AG04450 (cell line): ENCODE measurements at regions of chr1 and their contacts with region 1.

Region 1: GRCh38 chr1:226121587-226122400 is 59.3 kb downstream of the H3-3A start:
- DNase-seq: no peak
- H3K4me3 ChIP-seq: peak overlapping the region; percentile 67
- H3K27ac ChIP-seq: no peak overlapping the region
- H3K27me3 ChIP-seq: peaks cover 3% of the 10 kb centered on the region
- CTCF ChIP-seq: peak; percentile 45

Region 2: GRCh38 chr1:226109829-226110248 is 12.0 kb before region 1 on chr1:
- CTCF ChIA-PET with region 1: interaction called, 73 read pairs
- POLR2A ChIA-PET with region 1: no interaction called
- DNase-seq: no peak
- H3K4me3 ChIP-seq: peak overlapping the region; percentile 59
- H3K27ac ChIP-seq: peak overlapping the region; percentile 65
- H3K27me3 ChIP-seq: no peaks in the 10 kb centered on the region
- CTCF ChIP-seq: no peak

Region 3: DNA sequence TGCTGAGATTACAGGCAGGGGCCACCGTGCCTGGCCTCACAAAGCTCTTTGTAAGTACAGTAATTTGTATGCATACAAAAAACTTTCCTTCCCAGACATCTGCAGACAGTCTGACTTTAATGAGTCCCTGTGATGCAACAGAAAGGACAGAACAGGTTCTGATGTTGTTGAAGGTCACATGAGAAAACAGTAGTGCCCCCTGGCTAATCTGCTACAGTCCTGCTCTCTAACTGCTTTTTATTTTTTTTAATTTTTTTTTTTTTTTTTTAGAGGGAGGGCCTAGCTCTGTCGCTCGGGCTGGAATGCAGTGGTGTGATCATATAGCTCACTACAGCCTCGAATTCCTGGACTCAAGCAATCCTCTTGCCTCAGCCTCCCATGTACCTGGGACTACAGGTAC is 28.0 kb after region 1 on chr1:
- CTCF ChIA-PET with region 1: interaction called, 20 read pairs
- POLR2A ChIA-PET with region 1: no interaction called
- DNase-seq: no peak
- H3K4me3 ChIP-seq: no peak overlapping the region
- H3K27ac ChIP-seq: no peak overlapping the region
- H3K27me3 ChIP-seq: no peaks in the 10 kb centered on the region
- CTCF ChIP-seq: 0 out of 2 replicates have a peak, but pooled peaks have one; percentile 24

Region 4: GRCh38 chr1:226201029-226201593 is 79.3 kb after region 1 on chr1:
- CTCF ChIA-PET with region 1: interaction called, 184 read pairs
- POLR2A ChIA-PET with region 1: no interaction called
- DNase-seq: no peak
- H3K4me3 ChIP-seq: no peak overlapping the region
- H3K27ac ChIP-seq: no peak overlapping the region
- H3K27me3 ChIP-seq: peaks cover 6% of the 10 kb centered on the region
- CTCF ChIP-seq: peak; percentile 53

Region 5: GRCh38 chr1:226327761-226328162 is 206.0 kb after region 1 on chr1:
- CTCF ChIA-PET with region 1: interaction called, 27 read pairs
- POLR2A ChIA-PET with region 1: no interaction called
- DNase-seq: no peak
- H3K4me3 ChIP-seq: no peak overlapping the region
- H3K27ac ChIP-seq: no peak overlapping the region
- H3K27me3 ChIP-seq: peaks cover 2% of the 10 kb centered on the region
- CTCF ChIP-seq: no peak

Region 6: DNA sequence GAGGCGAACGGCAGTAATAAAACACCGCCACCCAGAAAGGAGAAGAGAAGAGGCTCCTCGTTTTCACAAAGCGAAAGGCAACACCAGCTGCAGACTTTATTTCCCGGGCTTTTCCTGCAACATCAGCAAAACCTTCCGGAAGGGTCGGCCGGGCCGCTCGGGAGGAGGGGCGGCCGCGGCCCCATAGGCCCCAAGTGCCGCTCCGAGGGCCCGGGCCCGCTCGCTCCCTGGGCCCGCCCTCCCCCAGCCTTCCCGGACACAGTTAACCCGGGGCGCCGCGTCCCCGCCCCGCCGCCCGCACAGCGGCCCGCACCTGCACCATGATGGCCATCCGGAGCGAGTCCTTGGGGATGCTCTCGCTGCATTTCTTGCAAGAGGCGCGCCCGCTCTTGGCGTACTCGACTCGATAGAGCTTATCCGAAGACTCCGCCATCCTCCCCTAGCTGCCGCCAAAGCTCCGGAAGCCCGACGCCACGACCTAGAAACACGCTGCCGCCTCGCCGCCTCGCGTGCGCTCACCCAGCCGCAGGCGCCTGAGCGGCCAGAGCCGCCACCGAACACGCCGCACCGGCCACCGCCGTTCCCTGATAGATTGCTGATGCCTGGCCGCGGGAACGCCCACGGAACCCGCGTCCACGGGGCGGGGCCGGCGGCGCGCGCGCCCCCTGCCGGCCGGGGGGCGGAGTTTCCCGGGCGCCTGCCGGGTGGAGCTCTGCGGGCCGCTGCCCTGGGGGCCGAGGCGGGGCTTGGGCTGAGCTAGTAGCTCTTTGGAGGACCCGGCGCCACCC is 285.9 kb after region 1 on chr1 and contains the start of gene PARP1:
- CTCF ChIA-PET with region 1: interaction called, 22 read pairs
- POLR2A ChIA-PET with region 1: no interaction called
- DNase-seq: no peak
- H3K4me3 ChIP-seq: peak within 1 kb of the TSS; percentile 81
- H3K27ac ChIP-seq: peak within 1 kb of the TSS; percentile 52
- H3K27me3 ChIP-seq: peaks cover 7% of the 10 kb centered on the region
- CTCF ChIP-seq: peak; percentile 31; the same call in 1 of the 2 replicates
- polyA plus RNA-seq, gene PARP1: 101 and 111 TPM in 2 replicates